AG04450 (cell line): ENCODE measurements at regions of chr22 and their contacts with region 1.

Region 1: DNA sequence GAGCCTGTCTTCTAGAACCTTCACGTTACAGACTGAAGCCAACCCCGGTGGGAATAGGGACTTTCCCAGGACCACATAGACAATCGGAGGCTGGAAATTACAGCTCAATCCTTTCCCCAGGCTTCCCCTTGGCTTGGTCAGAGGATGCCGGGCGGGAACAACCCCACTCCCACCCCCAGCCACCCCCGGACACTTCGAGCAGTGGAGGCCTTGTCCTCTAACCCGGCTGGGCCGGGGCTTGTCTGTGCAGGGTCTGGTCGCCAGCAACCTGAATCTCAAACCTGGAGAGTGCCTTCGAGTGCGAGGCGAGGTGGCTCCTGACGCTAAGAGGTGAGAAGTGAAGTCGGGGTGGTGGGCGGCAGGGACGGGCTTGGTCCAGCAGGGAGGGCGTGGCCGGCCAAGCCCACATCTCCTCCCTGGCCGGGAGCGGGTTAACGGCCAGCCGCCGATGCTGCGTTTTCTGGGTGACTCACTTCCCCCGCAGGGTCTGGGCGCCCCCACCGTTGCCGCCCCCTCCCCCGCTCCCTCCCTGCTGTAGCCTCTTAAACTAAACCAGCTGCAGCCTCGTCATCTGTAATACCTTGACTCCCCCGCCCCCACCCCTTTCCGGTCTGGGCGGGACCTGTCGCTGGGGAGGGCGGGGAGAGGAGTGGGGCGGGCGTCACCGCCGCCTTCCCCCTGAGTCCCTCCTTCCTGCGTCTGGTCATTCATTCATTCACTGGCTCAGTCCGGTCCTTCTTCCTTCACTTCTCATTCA is 1.5 kb downstream of the LGALS1 start:
- DNase-seq: peak; percentile 96
- H3K4me3 ChIP-seq: peak overlapping the region; percentile 97
- H3K27ac ChIP-seq: peak overlapping the region; percentile 72
- H3K27me3 ChIP-seq: no peaks in the 10 kb centered on the region
- CTCF ChIP-seq: no peak

Region 2: DNA sequence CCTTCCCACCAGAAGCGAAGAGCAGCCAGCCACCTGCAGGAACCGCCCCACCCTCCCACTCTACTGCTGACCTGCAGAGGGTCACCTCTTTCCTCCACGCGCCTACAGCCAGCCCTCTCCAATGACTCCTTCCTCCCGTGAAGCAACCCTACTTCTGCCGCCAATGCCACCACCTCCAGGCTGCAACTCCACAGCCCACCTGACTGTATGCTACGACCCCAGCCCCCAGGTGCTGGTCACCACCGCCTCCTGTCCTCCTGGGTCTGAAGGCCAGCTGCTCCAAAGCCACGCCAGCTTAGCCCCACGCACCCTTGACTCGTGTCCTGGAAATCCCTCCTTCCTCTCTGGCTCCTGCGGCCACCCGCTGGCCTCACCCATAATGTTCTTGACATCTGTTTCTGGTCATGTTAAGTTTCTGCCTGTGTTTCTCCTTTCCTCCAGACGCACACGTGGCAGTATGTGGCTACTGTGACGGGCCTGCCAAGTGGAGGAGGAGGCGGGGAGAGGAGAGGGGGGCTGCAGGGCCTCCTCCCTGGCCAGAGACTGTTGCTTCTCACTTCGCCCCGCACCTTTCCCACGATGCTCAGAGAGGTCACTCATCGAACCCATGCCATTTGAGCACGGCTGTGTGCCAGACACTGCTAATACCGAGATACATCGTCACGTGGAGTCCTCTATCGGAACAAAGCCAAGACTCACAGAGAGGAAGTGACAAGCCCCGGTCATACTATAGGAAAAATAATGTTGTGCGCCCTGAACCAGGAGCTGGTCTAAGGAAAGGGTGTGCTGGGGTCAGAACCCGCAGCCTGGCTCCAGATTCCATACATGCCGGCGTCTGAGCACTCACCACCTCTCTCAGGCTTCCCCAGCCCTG is 500.5 kb before region 1 on chr22:
- CTCF ChIA-PET with region 1: no interaction called
- POLR2A ChIA-PET with region 1: no interaction called
- DNase-seq: no peak
- H3K4me3 ChIP-seq: no peak overlapping the region
- H3K27ac ChIP-seq: peak overlapping the region; percentile 31
- H3K27me3 ChIP-seq: peaks cover 16% of the 10 kb centered on the region
- CTCF ChIP-seq: no peak

Region 3: GRCh38 chr22:37608477-37609239 is 68.3 kb before region 1 on chr22 and contains the start of gene GGA1:
- CTCF ChIA-PET with region 1: interaction called, 5 read pairs
- POLR2A ChIA-PET with region 1: interaction called, 15 read pairs
- DNase-seq: peak; percentile 90
- H3K4me3 ChIP-seq: peak within 1 kb of the TSS; percentile 82
- H3K27ac ChIP-seq: peak within 1 kb of the TSS; percentile 99
- H3K27me3 ChIP-seq: peaks cover 12% of the 10 kb centered on the region
- CTCF ChIP-seq: no peak
- polyA plus RNA-seq, gene GGA1: 24.7 and 26.1 TPM in 2 replicates

Region 4: DNA sequence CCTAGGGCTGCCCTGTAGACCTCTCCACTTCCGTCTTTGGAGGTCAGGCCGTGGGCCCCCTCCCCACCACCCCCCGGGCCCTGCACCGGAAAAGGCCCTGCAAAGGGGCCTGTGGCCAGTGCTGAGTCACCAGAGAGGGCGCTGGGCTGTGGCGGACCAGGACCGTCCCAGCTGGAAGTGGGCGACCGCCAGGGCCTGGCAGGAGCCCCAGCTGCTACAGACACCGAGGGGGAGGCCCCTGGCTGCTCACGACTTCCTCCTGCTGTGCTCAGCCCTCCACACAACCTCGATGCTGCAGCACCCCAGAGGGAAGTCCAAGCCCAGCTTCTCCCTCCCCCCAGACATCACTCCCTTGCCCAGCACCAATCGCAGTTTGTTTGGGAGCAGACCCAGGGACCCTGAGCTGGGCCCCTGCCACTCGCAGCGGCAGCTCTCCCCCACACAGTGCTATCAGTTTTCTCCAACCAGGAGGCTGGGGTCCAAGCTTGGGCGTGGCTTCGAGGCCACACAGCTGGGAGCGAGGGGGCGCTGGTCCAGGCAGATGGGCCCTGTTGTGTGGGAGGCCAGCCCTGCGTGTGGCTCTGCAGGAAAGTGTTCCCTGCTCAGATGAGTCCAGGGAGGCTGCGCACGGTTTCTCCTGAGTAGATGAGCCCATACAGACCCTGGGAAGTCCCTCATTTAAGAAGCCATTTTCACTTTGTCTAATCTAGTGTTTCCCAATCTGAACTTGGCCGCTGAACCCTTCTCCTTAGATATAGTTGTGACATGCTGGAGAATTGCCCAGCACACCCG is 43.1 kb before region 1 on chr22:
- CTCF ChIA-PET with region 1: interaction called, 6 read pairs
- POLR2A ChIA-PET with region 1: interaction called, 24 read pairs
- DNase-seq: peak; percentile 84
- H3K4me3 ChIP-seq: peak overlapping the region; percentile 29
- H3K27ac ChIP-seq: peak overlapping the region; percentile 91
- H3K27me3 ChIP-seq: no peaks in the 10 kb centered on the region
- CTCF ChIP-seq: peak; percentile 23

Region 5: GRCh38 chr22:37658133-37659065 is 18.5 kb before region 1 on chr22 and contains the start of gene PDXP:
- CTCF ChIA-PET with region 1: interaction called, 13 read pairs
- POLR2A ChIA-PET with region 1: interaction called, 52 read pairs
- DNase-seq: peak; percentile 100
- H3K4me3 ChIP-seq: peak within 1 kb of the TSS; percentile 78
- H3K27ac ChIP-seq: peak within 1 kb of the TSS; percentile 85
- H3K27me3 ChIP-seq: no peaks in the 10 kb centered on the region
- CTCF ChIP-seq: no peak
- polyA plus RNA-seq, gene PDXP: 11.7 and 17.7 TPM in 2 replicates

Region 6: GRCh38 chr22:37664249-37665101 is 12.4 kb before region 1 on chr22:
- CTCF ChIA-PET with region 1: interaction called, 13 read pairs
- POLR2A ChIA-PET with region 1: interaction called, 52 read pairs
- DNase-seq: no peak
- H3K4me3 ChIP-seq: no peak overlapping the region
- H3K27ac ChIP-seq: peak overlapping the region; percentile 21
- H3K27me3 ChIP-seq: no peaks in the 10 kb centered on the region
- CTCF ChIP-seq: no peak

Region 7: DNA sequence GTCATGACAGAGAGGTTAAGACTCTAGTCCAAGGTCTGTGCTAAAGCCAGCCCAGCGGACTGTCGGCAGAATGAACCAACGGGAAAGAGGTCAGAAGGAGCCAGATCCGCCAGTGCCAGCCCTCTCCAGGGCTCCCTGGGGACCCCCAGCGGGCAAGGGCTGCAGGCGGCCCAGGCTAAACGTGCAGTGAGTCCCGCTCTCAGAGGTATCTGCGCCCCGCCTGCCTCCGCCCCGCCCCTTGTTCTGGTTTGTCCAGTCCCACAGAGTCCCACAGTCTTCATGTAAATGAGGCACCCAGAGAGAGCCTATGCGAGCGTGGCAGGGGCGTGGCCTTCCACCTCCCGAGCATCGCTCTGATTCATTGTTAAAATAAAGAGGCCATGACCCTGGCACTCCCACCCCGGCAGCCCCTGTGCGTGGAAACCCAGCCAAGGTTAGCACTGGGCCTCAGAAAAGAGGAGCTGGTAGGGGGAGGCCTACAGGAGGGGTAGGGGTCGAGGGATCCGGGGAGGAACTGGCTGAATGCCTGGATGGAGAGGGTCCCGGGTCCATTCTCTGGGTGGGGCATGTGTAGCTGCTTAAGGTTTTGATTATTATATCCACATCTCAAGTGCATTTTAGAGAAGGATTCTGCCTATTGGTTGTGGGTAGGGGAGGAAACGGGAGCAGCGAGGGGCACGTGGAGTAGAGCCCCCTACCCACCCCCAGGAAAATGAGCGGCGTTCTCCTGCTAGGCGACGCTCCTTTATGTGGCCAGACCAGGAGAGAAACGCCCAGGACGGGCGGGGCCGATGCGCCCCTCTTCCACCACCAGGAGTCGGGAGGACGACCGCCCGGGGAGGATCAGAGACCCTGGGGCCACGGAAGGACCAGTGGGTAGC is 20.0 kb after region 1 on chr22 and contains the start of gene TRIOBP:
- CTCF ChIA-PET with region 1: no interaction called
- POLR2A ChIA-PET with region 1: interaction called, 17 read pairs
- DNase-seq: peak; percentile 78
- H3K4me3 ChIP-seq: peak within 1 kb of the TSS; percentile 48
- H3K27ac ChIP-seq: no peak within 1 kb of the TSS
- H3K27me3 ChIP-seq: no peaks in the 10 kb centered on the region
- CTCF ChIP-seq: peak; percentile 66
- polyA plus RNA-seq, gene TRIOBP: 37.0 and 76.4 TPM in 2 replicates

Region 8: DNA sequence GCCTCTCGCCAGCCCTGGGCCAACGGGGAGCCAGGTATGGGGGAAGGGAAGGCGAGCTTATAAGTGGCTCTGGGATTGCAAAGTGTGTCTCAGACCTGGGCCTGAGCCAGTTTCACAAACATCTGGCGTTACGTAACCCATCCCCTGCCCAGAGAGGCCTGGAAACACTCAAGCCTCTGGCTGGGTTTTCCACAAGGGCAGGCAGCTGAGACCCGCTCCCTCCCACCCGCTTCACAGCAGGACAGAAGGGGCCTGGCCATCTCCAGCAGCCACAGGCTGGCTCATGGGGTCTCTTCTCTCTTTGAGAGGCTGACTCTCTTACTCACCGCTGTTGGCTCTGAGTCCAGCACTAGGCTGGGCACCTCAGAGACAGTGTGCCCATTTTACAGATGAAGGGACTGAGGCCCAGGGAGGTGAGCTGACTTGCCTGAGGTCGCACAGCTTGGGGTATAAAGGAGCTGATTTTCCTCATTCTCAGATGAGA is 64.4 kb after region 1 on chr22:
- CTCF ChIA-PET with region 1: no interaction called
- POLR2A ChIA-PET with region 1: interaction called, 11 read pairs
- DNase-seq: peak; percentile 98
- H3K4me3 ChIP-seq: no peak overlapping the region
- H3K27ac ChIP-seq: peak overlapping the region; percentile 89
- H3K27me3 ChIP-seq: no peaks in the 10 kb centered on the region
- CTCF ChIP-seq: no peak

Region 9: GRCh38 chr22:37812869-37813678 is 136.2 kb after region 1 on chr22:
- CTCF ChIA-PET with region 1: no interaction called
- POLR2A ChIA-PET with region 1: no interaction called
- DNase-seq: no peak
- H3K4me3 ChIP-seq: no peak overlapping the region
- H3K27ac ChIP-seq: no peak overlapping the region
- H3K27me3 ChIP-seq: no peaks in the 10 kb centered on the region
- CTCF ChIP-seq: no peak